HEK293T (cell line): ENCODE measurements at regions of chr1 and their contacts with region 1.

Region 1: GRCh38 chr1:231603598-231604275 is 22.9 kb upstream of the DISC1 start:
- DNase-seq: peak; percentile 76

Region 2: DNA sequence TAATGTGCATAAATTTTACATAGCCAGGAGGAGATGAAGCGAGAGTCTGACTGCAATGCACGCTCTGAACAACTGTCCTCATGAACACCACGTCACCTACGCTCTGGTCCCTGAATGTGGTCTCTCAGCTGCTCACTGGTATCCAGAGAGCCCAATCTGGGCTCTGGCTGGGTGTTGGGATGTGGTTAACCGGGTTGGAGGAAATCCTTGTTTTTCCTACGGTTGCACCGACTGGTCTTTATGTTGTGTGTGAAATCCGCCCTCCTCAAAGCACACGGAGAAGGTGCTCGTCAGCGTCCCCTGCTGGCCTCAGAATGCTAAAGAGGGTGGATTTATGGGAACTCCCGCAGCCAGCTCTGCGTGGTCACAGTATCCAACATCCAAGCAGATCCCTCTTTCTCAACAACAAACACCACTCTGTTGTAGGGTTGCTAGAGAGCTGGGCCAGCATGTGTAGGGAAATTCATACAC is 511.9 kb before region 1 on chr1:
- CTCF ChIA-PET with region 1: interaction called, 10 read pairs
- POLR2A ChIA-PET with region 1: no interaction called
- DNase-seq: peak; percentile 87

Region 3: DNA sequence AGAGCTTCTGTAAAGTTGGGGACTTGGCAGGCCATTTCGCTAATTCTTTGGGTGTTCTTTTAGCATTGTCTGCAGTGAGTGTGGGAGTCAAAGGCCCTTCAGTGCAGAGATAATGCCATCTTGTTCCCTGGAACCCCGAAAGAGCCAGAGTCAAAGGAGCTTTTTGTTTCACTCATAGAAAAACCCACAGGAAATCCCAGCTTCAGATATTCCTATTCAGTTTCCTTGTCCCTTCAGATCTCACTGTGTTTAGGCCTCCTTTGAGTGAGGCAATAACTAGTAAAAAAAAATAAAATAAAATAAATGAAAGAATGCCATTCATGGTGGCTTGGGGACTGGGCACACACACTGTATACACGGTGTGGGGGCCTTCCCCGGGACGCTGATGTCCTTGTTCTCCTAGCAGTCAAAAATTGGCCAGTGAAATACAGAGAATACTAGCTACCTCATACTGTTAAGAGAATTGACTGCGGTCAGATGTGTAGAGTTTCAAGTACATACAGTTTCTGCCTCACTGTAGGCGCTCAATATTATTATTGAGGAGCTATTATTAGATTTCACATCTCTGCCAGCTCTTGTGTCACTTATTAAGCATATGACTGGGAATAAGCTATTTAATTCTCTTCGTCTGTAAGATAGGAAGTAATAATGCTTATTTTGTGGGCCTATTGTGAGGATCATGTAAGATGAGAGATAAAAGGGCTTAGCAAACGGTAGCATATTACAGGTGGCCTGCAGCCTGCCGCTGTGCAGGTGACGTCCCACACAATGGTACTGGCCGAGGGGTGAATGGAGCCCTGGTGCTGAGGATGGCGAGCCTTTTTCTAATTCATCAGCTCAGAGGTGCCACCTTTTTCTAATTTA is 39.6 kb after region 1 on chr1:
- CTCF ChIA-PET with region 1: no interaction called
- POLR2A ChIA-PET with region 1: no interaction called
- DNase-seq: no peak